ENCODE measurements at regions of chr7 and their contacts with region 1.

Region 1: GRCh38 chr7:120395526-120396019 is 122.6 kb downstream of the KCND2 start:
- DNase-seq: peak; percentile 81
- ATAC-seq: peak; percentile 85
- H3K4me3 ChIP-seq: peak overlapping the region; percentile 62
- H3K27ac ChIP-seq: peak overlapping the region; percentile 32
- H3K4me1 ChIP-seq: peaks cover 18% of the 10 kb centered on the region
- H3K27me3 ChIP-seq: no peaks in the 10 kb centered on the region
- CTCF ChIP-seq: no peak
- EP300 ChIP-seq: peak; percentile 7 to 48; a peak in 1 of 4 replicates
- POLR2A ChIP-seq: peak; percentile 59
- RAD21 ChIP-seq: no peak

Region 2: DNA sequence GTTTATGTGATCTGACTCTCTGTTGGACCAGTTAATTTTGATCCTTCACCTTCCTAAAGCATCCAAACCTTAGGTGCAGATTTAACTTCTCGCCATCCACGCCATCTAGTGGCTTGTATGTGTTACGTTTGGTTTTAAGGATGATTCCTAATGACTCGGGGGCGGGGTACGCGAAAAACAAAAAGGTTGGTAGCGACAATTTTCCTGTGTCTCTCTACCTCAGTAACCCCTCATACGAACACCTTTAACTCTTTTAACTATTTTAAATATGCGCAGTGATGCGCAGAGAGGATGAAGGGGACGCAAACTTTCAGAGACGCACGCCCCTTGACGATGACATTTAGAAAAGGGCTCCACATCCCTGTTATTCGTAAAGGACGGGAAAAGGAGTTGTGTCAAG is 123.3 kb before region 1 on chr7:
- CTCF ChIA-PET with region 1: interaction called, 4 read pairs
- POLR2A ChIA-PET with region 1: interaction called, 7 read pairs
- RAD21 ChIA-PET with region 1: interaction called, 15 read pairs
- SMC1A ChIA-PET with region 1: interaction called, 49 read pairs
- in situ Hi-C with region 1: no loop called
- intact Hi-C with region 1: loop called (anchors 2 kb)
- DNase-seq: peak; percentile 27
- ATAC-seq: peak; percentile 63
- H3K4me3 ChIP-seq: peak overlapping the region; percentile 82
- H3K27ac ChIP-seq: peak overlapping the region; percentile 64; the same call in 1 of the 2 replicates
- H3K4me1 ChIP-seq: no peaks in the 10 kb centered on the region
- H3K27me3 ChIP-seq: no peaks in the 10 kb centered on the region
- CTCF ChIP-seq: peak; percentile 71 to 82 (median 75)
- EP300 ChIP-seq: no peak
- POLR2A ChIP-seq: no peak
- RAD21 ChIP-seq: peak; percentile 92

Region 3: DNA sequence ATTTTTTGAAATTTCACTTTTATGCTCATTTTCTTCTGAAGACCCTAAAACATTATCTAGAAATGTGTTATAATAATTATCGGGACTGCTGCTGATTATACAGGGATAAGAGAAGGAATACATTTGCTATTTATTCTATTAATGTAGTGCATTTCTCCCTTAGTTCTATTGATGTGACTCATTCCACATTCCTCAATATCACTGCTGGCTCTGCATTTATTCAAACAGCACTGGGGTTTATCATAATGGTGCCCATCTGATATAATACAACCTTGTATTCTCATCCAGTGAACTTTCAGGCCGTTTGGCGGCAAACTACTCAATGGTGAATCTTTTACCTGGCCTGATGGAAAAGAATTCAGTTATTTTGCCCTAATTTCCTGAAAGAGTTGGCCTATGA is 114.8 kb before region 1 on chr7:
- CTCF ChIA-PET with region 1: interaction called, 4 read pairs
- POLR2A ChIA-PET with region 1: interaction called, 4 read pairs
- RAD21 ChIA-PET with region 1: interaction called, 15 read pairs
- SMC1A ChIA-PET with region 1: interaction called, 49 read pairs
- in situ Hi-C with region 1: no loop called
- intact Hi-C with region 1: no loop called
- DNase-seq: no peak
- ATAC-seq: no peak
- H3K4me3 ChIP-seq: no peak overlapping the region
- H3K27ac ChIP-seq: no peak overlapping the region
- H3K4me1 ChIP-seq: no peaks in the 10 kb centered on the region
- H3K27me3 ChIP-seq: no peaks in the 10 kb centered on the region
- CTCF ChIP-seq: no peak
- EP300 ChIP-seq: no peak
- POLR2A ChIP-seq: no peak
- RAD21 ChIP-seq: no peak

Region 4: DNA sequence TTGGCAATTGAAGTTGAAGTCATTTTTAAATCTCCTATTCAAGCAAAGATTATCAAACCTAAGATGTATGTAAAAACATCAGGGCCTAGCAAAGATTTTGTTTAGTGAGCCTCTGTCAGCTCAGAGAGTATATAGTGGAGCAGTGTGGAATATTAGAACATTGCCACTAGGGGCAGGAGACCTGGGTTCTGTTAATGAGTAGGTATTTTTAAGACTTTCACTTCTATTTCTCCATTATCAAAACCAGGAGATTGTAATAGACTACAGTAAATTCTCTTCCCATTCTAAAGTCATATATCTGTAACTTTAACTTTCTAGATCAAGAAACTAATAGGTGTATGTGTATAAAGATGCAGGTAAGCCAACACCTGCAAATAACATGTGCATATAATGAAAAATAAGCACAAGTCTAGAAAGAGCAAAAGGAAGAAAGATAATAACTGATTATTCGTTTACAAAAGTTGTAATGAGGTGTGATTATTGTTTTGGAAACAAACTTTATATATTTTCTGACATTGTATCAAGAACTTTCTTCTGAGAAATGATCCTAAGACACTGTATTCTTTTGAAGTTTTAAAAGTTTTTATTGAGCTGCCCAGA is 58.2 kb before region 1 on chr7:
- CTCF ChIA-PET with region 1: interaction called, 9 read pairs
- POLR2A ChIA-PET with region 1: interaction called, 5 read pairs
- RAD21 ChIA-PET with region 1: interaction called, 6 read pairs
- SMC1A ChIA-PET with region 1: interaction called, 9 read pairs
- in situ Hi-C with region 1: no loop called
- intact Hi-C with region 1: loop called (anchors 2 kb)
- DNase-seq: no peak
- ATAC-seq: peak; percentile 82
- H3K4me3 ChIP-seq: no peak overlapping the region
- H3K27ac ChIP-seq: no peak overlapping the region
- H3K4me1 ChIP-seq: peaks cover 5% of the 10 kb centered on the region; the same call in 1 of the 2 replicates
- H3K27me3 ChIP-seq: no peaks in the 10 kb centered on the region
- CTCF ChIP-seq: peak; percentile 42 to 49 (median 47)
- EP300 ChIP-seq: no peak
- POLR2A ChIP-seq: no peak
- RAD21 ChIP-seq: peak; percentile 37; the same call in 1 of the 2 replicates

Region 5: DNA sequence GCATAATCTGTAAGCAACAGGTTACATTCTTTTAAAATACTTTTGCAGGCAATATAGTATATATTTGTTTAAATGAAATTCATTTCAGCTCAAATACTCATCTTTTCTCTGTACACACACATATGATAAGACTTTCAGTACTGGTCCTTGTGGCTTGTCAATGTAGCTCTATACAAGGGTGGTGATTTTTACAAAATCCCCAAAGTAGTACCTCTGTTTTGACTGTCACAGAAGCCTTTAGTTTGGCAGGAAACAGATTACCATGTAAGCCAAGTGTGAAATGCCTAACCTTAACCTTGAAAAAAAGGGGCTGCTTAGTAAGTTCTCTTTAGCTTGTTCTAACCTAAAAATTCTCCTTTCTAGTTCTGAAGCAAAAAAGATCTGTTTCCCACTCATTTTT is 34.7 kb before region 1 on chr7:
- CTCF ChIA-PET with region 1: interaction called, 3 read pairs
- POLR2A ChIA-PET with region 1: interaction called, 5 read pairs
- RAD21 ChIA-PET with region 1: interaction called, 35 read pairs
- SMC1A ChIA-PET with region 1: interaction called, 32 read pairs
- in situ Hi-C with region 1: no loop called
- intact Hi-C with region 1: loop called (anchors 5 kb)
- DNase-seq: peak; percentile 61
- ATAC-seq: peak; percentile 97
- H3K4me3 ChIP-seq: no peak overlapping the region
- H3K27ac ChIP-seq: peak overlapping the region; percentile 50
- H3K4me1 ChIP-seq: peaks cover 9% of the 10 kb centered on the region
- H3K27me3 ChIP-seq: no peaks in the 10 kb centered on the region
- CTCF ChIP-seq: no peak
- EP300 ChIP-seq: peak in 1 of 2 experiments; percentile 41; a peak in 1 of 4 replicates
- POLR2A ChIP-seq: no peak
- RAD21 ChIP-seq: 0 out of 2 replicates have a peak, but pooled peaks have one; percentile 6

Region 6: DNA sequence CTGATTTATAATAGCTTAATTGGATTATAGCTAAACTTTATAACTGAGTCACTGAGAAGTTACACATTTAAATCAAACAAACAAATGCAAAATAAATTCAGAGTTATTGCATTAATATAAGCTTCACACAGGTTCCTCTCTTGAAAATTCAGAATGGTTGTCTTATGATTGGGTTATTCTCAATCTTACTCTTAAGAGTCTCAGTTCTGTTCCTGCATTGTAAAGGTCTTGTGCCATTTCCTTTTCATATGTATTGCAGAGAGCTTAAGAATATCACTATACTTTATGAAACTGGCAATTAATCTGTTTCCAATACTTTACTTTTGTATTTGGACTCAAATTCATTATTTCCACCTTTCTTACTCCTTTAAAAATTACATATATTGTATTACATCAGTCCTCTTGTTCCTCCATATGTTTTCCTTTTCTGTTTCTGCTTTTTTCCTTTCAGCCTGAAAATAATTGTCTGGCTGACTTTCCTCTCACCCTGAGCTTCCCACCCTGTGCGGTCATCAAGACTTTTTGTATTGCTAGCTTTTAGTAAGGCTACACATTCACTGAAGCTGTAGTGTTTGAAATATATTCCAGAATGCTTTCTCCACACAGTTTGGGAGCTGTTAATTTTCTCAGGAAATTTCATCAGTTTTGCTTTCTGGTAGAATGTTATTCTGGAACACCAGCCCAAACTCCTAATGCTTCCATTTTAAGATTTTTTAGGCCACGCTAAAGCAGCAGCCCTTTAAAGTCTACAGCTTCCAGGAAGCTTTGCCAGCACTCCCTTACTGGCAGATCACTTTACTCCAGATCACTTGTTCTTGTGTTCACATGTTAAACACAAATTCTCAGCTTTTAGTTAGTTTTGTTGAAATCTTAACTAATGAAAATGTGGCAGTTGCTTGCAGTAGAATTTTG is 16.8 kb after region 1 on chr7:
- CTCF ChIA-PET with region 1: interaction called, 11 read pairs
- POLR2A ChIA-PET with region 1: interaction called, 22 read pairs
- RAD21 ChIA-PET with region 1: interaction called, 32 read pairs
- SMC1A ChIA-PET with region 1: interaction called, 305 read pairs
- in situ Hi-C with region 1: no loop called
- intact Hi-C with region 1: no loop called
- DNase-seq: no peak
- ATAC-seq: peak; percentile 82
- H3K4me3 ChIP-seq: peak overlapping the region; percentile 36
- H3K27ac ChIP-seq: peak overlapping the region; percentile 75
- H3K4me1 ChIP-seq: peaks cover 5% of the 10 kb centered on the region; the same call in 1 of the 2 replicates
- H3K27me3 ChIP-seq: no peaks in the 10 kb centered on the region
- CTCF ChIP-seq: no peak
- EP300 ChIP-seq: no peak; a peak in 1 of 4 replicates
- POLR2A ChIP-seq: no peak
- RAD21 ChIP-seq: no peak

Region 7: DNA sequence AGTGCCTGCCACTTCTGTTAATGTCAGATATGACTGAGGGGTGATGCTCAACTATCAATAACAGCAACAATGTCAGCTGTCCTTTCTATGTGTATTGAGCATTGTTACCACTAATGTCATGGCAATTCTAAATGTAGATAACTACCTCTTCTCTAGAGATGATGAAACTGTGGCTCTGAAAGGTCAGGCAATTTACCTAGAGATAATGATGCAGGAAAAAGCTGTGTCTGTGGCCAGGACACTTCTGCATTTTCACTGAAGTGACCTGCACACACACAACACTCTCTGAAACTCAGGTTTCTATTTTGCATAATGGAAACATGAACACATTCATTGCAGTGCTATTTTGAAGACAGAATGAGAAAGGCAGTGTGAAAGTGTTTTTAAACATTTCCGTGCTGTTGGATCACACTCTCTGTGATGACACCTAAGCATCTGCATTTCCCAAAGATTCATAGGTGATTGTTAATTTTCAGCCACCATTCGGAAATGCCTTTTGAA is 25.6 kb after region 1 on chr7:
- CTCF ChIA-PET with region 1: interaction called, 11 read pairs
- POLR2A ChIA-PET with region 1: interaction called, 11 read pairs
- RAD21 ChIA-PET with region 1: interaction called, 11 read pairs
- SMC1A ChIA-PET with region 1: interaction called, 305 read pairs
- in situ Hi-C with region 1: no loop called
- intact Hi-C with region 1: no loop called
- DNase-seq: peak; percentile 91
- ATAC-seq: peak; percentile 91
- H3K4me3 ChIP-seq: no peak overlapping the region; the same call in 1 of the 2 replicates
- H3K27ac ChIP-seq: peak overlapping the region; percentile 69
- H3K4me1 ChIP-seq: peaks cover 27% of the 10 kb centered on the region
- H3K27me3 ChIP-seq: no peaks in the 10 kb centered on the region
- CTCF ChIP-seq: no peak
- EP300 ChIP-seq: peak; percentile 91 to 98
- POLR2A ChIP-seq: no peak
- RAD21 ChIP-seq: no peak; the same call in 1 of the 2 replicates

Measured in GM12878 (cell line).